ENCODE measurements at regions of chr3 and their contacts with region 1.

Region 1: DNA sequence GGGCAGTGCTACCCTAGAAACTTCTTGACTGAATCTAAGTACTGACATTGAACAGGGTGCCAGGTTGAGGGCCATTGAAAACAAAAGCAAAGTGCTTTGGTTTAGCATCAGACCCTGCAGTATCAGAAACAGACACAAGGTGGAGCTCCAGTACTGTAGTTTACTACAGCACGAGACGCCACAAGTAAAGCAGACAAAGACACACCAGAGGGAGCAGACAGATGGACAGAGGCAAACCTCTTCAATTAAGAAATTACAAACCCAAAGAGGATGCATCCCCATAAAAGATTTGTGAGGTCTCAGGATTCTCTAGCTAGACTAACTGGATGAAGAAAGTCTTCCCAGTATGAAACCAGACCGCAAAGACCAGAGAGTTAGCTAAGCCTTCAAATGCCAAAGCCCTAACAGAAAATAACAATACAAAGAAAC is 16.6 kb downstream of the TOP2B start:
- DNase-seq: no peak
- ATAC-seq: peak; percentile 94
- H3K4me3 Mint-ChIP-seq: no peak overlapping the region
- H3K27ac Mint-ChIP-seq: no peak overlapping the region
- H3K4me1 Mint-ChIP-seq: peaks cover 37% of the 10 kb centered on the region
- H3K27me3 Mint-ChIP-seq: no peaks in the 10 kb centered on the region
- CTCF ChIP-seq: no peak

Region 2: DNA sequence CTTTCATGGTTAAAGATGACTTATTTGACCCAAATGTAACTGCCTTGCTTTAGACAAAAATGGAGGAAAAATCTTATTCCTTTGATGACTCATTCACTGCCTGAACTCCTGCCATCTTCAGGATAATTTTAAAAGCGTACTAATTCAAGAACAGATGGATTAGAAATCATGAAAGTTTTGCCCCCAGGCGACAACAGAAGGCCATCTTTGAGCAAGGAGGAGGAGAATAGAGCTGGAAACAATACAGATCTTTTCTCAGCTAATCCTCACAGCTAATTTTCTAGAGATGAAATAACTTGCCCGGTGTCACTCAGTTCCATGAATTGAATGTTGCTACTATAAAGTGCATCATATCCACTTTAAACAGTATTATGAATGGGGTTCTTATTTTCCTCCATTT is 544.7 kb before region 1 on chr3:
- CTCF ChIA-PET with region 1: no interaction called
- POLR2A ChIA-PET with region 1: no interaction called
- intact Hi-C with region 1: no loop called
- DNase-seq: no peak
- ATAC-seq: no peak
- H3K4me3 Mint-ChIP-seq: no peak overlapping the region
- H3K27ac Mint-ChIP-seq: no peak overlapping the region
- H3K4me1 Mint-ChIP-seq: no peaks in the 10 kb centered on the region
- H3K27me3 Mint-ChIP-seq: no peaks in the 10 kb centered on the region
- CTCF ChIP-seq: no peak

Region 3: DNA sequence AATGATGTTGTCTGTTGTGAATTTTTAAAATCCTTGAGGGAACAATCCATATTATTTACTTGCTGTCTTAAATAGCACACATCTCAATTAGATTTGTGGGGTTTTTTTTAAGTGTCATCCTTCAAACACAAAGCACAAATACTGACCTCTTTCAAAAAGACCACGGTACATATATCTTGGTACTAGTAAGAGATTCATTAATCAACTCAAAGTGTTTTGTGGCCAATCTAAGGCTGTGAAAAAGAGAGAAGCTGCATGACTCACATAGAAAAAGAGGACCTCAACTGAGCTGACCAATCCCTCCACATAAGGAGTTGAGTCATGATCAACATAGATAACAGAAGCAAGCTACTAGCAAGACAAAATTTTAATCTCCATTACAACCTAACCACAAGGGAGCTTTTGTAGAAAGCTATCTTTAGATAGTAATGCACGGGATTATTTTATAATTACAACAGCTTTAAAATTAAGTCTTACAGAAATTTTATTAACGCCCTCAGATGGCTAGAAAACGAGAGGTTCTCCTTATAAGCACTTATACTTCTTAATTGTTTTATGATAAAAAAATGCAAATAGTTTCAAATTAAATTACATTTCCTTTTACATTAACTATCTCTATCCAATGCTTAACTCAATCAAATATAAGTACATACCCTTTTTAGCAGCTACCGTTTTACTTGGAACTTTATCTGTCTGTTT is 43.9 kb before region 1 on chr3:
- CTCF ChIA-PET with region 1: no interaction called
- POLR2A ChIA-PET with region 1: no interaction called
- intact Hi-C with region 1: loop called (anchors 5 kb)
- DNase-seq: no peak
- ATAC-seq: no peak
- H3K4me3 Mint-ChIP-seq: no peak overlapping the region
- H3K27ac Mint-ChIP-seq: no peak overlapping the region
- H3K4me1 Mint-ChIP-seq: no peaks in the 10 kb centered on the region
- H3K27me3 Mint-ChIP-seq: no peaks in the 10 kb centered on the region
- CTCF ChIP-seq: no peak

Region 4: DNA sequence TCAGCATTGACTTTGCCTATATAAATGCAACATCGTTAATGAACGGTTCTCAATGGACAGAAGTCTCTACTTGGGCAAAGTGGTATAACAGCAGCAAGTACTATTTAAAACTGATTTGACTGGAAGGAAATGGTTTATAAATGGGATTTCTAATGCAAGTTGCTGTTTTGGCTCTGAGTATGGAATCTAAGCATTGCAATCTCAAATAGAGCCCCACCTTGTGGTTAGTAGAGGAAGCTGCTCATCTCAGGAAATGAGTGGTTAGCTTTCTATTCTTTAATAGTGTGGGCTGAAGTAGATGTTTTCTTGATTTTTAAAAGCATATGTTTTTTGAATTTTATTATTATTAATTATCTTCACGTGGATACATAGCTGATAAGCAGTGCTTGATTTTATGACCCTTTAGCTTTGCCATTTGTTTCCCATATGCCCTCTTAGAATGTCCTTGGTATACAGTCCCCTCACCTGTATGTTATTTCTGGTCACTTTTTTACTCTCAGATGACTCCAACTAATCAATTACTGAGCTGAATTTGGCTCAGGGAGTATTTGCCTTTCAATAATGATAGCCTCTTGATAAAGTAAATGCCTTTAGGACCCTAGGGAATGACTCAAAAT is 208.9 kb after region 1 on chr3:
- CTCF ChIA-PET with region 1: interaction called, 197 read pairs
- POLR2A ChIA-PET with region 1: interaction called, 3 read pairs
- intact Hi-C with region 1: loop called (anchors 1 kb)
- DNase-seq: no peak
- ATAC-seq: peak; percentile 71
- H3K4me3 Mint-ChIP-seq: no peak overlapping the region
- H3K27ac Mint-ChIP-seq: no peak overlapping the region
- H3K4me1 Mint-ChIP-seq: no peaks in the 10 kb centered on the region
- H3K27me3 Mint-ChIP-seq: no peaks in the 10 kb centered on the region
- CTCF ChIP-seq: peak; percentile 92

Region 5: DNA sequence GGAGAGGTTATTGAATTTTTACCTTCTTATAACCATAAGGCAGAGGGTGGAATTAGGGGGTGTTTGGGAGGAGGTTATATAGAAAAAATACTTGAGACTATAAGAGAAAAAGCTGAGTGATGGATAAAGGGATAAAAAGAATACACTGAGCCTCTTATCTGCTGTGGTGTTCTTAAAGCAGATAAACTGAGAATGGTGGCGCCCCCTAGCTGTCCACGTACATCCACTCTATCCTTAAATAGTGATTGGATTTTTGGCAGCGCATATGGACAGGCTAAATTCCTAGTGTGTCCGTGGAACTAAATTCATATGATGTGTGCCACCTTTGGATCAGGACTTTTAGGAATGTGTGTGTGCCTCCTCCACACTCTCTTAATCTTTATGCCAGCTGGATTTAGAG is 262.9 kb after region 1 on chr3:
- CTCF ChIA-PET with region 1: interaction called, 11 read pairs
- POLR2A ChIA-PET with region 1: no interaction called
- intact Hi-C with region 1: loop called (anchors 1 kb)
- DNase-seq: no peak
- ATAC-seq: no peak
- H3K4me3 Mint-ChIP-seq: no peak overlapping the region
- H3K27ac Mint-ChIP-seq: no peak overlapping the region
- H3K4me1 Mint-ChIP-seq: no peaks in the 10 kb centered on the region
- H3K27me3 Mint-ChIP-seq: peaks cover 3% of the 10 kb centered on the region
- CTCF ChIP-seq: no peak

Region 6: DNA sequence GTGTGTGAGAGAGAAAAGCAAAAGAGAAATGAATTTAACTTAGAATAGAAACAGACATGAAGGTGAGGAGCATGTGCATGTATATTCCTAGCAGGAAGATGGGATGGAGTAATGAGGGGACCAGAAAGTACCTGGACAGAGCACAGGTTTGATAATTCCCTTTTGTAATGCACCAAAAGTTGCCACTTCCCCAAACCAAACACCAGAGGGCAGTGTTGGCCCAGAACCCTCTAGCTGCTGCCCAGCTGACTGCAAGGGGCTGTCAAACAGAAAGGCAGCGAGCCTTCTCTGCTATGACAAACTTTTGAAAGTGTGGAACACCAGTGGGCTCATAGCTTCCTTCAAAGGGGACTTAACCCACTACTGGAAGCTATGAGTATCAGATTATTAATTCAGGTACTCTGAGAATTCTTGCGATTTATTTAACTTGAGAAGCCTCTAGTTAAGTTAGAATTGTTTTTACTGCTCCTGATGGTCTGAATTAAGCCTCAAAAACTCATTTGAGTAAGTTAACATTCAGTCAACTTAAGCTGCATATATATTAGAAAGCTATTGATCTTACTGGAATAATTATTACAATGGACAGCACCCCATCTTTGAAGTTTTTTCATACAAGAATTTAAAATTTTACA is 1486.2 kb after region 1 on chr3:
- CTCF ChIA-PET with region 1: no interaction called
- POLR2A ChIA-PET with region 1: no interaction called
- intact Hi-C with region 1: loop called (anchors 2 kb)
- DNase-seq: peak; percentile 27
- ATAC-seq: peak; percentile 71
- H3K4me3 Mint-ChIP-seq: no peak overlapping the region
- H3K27ac Mint-ChIP-seq: no peak overlapping the region
- H3K4me1 Mint-ChIP-seq: no peaks in the 10 kb centered on the region
- H3K27me3 Mint-ChIP-seq: no peaks in the 10 kb centered on the region
- CTCF ChIP-seq: peak; percentile 83